IMR-90 (cell line): ENCODE measurements at regions of chr14 and their contacts with region 1.

Region 1: GRCh38 chr14:69226178-69226577 is 33.8 kb upstream of the GALNT16 start:
- DNase-seq: no peak
- ATAC-seq: no peak
- H3K4me3 ChIP-seq: no peak overlapping the region
- H3K27ac ChIP-seq: no peak overlapping the region
- H3K4me1 ChIP-seq: no peaks in the 10 kb centered on the region; the same call in none of the 2 replicates
- H3K27me3 ChIP-seq: no peaks in the 10 kb centered on the region
- CTCF ChIP-seq: no peak
- POLR2A ChIP-seq: no peak
- RAD21 ChIP-seq: no peak

Region 2: DNA sequence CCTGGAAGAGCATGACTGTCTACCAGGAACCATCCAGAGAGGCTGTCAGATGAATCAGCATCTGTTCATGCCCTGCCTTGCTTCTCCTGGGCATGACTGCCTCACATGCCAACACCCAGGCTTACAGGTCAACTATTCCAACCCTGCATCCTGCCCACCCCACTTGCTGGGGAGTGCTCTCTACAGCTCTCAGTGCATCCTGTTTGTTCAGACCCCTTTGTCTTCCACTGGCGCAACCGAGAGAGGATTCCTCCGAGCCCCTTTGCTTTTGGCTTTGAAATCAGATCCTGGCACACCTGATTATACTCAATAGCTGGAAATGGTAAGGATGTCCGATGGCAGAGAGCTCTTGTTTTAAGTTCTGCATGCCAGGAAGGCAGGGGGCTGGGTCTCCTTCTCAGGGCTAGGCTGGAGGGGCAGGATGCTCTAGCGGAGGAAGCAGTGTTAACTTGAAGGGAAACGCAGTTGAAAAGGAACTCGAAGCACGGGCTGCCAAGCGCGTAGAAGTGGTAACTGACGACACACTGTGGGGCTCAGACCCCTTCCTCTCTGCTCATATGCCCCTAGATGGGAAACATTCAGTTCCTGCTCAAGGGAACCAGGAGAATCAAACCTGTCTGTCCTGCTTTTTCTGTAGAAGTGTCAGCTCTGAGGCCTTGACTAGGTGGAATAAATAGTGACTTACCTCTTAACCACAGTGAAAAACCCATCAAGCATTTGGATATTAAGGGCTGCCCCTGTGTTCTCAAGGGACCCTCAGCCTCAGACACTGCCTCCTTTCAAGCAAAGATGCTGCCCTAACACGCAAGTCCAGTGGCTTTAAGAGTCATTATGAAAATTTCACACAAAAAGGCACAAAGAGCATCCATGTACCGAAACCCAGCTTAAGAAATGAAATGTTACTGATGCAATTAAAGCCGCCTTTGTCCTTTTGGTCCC is 730.8 kb before region 1 on chr14:
- CTCF ChIA-PET with region 1: no interaction called
- POLR2A ChIA-PET with region 1: no interaction called
- dilution Hi-C with region 1: no loop called
- in situ Hi-C with region 1: no loop called
- intact Hi-C with region 1: no loop called
- DNase-seq: no peak
- ATAC-seq: no peak
- H3K4me3 ChIP-seq: no peak overlapping the region
- H3K27ac ChIP-seq: no peak overlapping the region
- H3K4me1 ChIP-seq: no peaks in the 10 kb centered on the region
- H3K27me3 ChIP-seq: no peaks in the 10 kb centered on the region
- CTCF ChIP-seq: no peak
- POLR2A ChIP-seq: no peak
- RAD21 ChIP-seq: no peak

Region 3: DNA sequence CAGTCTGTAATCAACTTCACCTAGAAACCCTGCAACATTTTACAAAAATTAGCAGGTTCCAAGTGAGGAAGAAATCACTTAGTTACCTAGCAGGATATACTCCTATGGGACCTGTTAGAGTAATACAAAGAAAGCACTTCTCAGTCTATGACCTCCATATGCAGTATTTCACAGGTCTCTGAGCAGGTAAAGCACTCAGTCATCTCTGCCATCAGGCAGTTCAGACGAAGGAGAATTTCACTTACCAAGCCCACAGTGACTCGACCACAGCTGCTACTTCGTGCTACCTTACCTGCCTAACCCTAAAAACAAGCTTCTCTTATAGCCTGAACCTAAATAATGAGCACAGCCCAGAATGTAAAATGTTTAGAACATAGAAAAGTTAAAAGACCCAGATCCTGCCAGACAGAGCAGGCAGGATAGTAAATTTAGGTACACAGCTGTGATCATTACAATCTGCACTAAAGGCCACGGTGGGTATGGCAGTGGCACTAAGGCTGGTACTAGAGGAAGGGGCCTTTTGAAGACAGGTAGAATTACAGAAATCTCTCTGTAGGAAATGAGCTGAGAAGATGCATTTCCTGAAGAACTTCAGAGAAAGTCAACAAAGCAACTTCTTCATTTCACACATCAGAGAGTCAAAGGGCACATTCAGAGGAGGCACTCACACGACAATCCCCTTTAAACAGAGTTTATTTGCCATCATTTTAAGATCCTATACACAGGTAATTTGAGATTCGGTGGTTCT is 109.0 kb before region 1 on chr14:
- CTCF ChIA-PET with region 1: no interaction called
- POLR2A ChIA-PET with region 1: no interaction called
- dilution Hi-C with region 1: no loop called
- in situ Hi-C with region 1: no loop called
- intact Hi-C with region 1: no loop called
- DNase-seq: no peak
- ATAC-seq: no peak
- H3K4me3 ChIP-seq: no peak overlapping the region
- H3K27ac ChIP-seq: no peak overlapping the region
- H3K4me1 ChIP-seq: no peaks in the 10 kb centered on the region
- H3K27me3 ChIP-seq: no peaks in the 10 kb centered on the region
- CTCF ChIP-seq: no peak
- POLR2A ChIP-seq: no peak
- RAD21 ChIP-seq: no peak

Region 4: GRCh38 chr14:69475194-69475818 is 249.1 kb after region 1 on chr14:
- CTCF ChIA-PET with region 1: no interaction called
- POLR2A ChIA-PET with region 1: interaction called, 12 read pairs
- dilution Hi-C with region 1: no loop called
- in situ Hi-C with region 1: no loop called
- intact Hi-C with region 1: no loop called
- DNase-seq: peak; percentile 7
- ATAC-seq: peak; percentile 53; the same call in 1 of the 2 replicates
- H3K4me3 ChIP-seq: no peak overlapping the region
- H3K27ac ChIP-seq: no peak overlapping the region
- H3K4me1 ChIP-seq: no peaks in the 10 kb centered on the region
- H3K27me3 ChIP-seq: peaks cover 27% of the 10 kb centered on the region
- CTCF ChIP-seq: peak; percentile 35
- POLR2A ChIP-seq: no peak
- RAD21 ChIP-seq: no peak